CD8-positive, alpha-beta memory T cell (primary cell): ENCODE measurements at regions of chr19 and their contacts with region 1.

Region 1: GRCh38 chr19:19410275-19411192 is 5.1 kb downstream of the GATAD2A start:
- DNase-seq: peak in 4 of 5 donors; percentile 26 to 60 (median 32)
- H3K4me3 ChIP-seq: no peak overlapping the region
- H3K4me3 Mint-ChIP-seq: peak overlapping the region; percentile 53 to 84 (median 72)
- H3K27ac ChIP-seq: no peak overlapping the region
- H3K27ac Mint-ChIP-seq: peak overlapping the region; percentile 80 to 95 (median 92)
- H3K4me1 ChIP-seq: peaks cover 55% of the 10 kb centered on the region
- H3K4me1 Mint-ChIP-seq: peaks cover 69 to 78% (median 77%) of the 10 kb centered on the region in 3 donors
- H3K27me3 ChIP-seq: no peaks in the 10 kb centered on the region
- H3K27me3 Mint-ChIP-seq: peaks cover 0 to 1% of the 10 kb centered on the region in 2 donors

Region 2: DNA sequence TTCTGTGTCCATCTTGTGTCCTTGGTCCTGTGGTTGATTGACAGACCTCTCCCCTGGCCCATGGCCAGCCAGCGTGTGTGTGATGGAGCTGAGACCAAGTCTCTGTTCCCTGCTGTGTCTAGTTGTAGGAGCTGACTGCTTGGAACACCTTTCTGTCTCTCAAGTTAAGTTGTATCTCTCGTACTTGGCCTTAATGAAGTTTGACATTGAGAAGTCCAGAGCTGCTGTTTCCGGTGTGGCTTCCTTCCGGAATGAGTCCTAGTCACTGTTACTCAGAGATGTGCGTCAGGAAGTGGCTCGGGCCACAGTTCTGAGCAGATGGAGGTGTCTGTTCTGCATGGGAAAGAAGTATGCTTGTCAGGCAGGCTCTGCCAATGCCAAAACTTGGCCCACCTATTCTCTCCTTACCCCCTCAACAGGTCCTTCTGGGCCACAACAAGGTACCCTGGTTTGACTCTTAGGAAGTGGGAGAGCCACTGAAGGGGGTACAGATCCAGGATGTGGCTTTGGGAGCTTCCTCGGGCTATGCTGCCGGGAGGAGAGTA is 49.2 kb after region 1 on chr19:
- CTCF ChIA-PET with region 1: interaction called, 7 read pairs
- POLR2A ChIA-PET with region 1: interaction called, 17 read pairs
- DNase-seq: peak; percentile 55 to 83 (median 67)
- H3K4me3 ChIP-seq: peak overlapping the region; percentile 52
- H3K4me3 Mint-ChIP-seq: peak overlapping the region; percentile 85 to 93 (median 89)
- H3K27ac ChIP-seq: peak overlapping the region; percentile 82
- H3K27ac Mint-ChIP-seq: peak overlapping the region; percentile 97 to 100 (median 99)
- H3K4me1 ChIP-seq: peaks cover 90% of the 10 kb centered on the region
- H3K4me1 Mint-ChIP-seq: peaks cover 75 to 92% (median 77%) of the 10 kb centered on the region in 3 donors
- H3K27me3 ChIP-seq: no peaks in the 10 kb centered on the region
- H3K27me3 Mint-ChIP-seq: no peaks in the 10 kb centered on the region